Dorsolateral prefrontal cortex (tissue), 120 donors: ENCODE measurements at regions of chr19 and their contacts with region 1.

Region 1: GRCh38 chr19:46614114-46614722 is 10.7 kb downstream of the PTGIR start:
- DNase-seq: peak; percentile 85 to 91 (median 88)
- H3K4me3 ChIP-seq: peak overlapping the region in 3 of 59 donors; percentile 16 to 28 (median 22)
- H3K27ac ChIP-seq: peak overlapping the region in 33 of 59 donors; percentile 7 to 83 (median 51)
- H3K27me3 ChIP-seq: no peaks in the 10 kb centered on the region
- CTCF ChIP-seq: peak; percentile 76 to 98 (median 93)

Region 2: DNA sequence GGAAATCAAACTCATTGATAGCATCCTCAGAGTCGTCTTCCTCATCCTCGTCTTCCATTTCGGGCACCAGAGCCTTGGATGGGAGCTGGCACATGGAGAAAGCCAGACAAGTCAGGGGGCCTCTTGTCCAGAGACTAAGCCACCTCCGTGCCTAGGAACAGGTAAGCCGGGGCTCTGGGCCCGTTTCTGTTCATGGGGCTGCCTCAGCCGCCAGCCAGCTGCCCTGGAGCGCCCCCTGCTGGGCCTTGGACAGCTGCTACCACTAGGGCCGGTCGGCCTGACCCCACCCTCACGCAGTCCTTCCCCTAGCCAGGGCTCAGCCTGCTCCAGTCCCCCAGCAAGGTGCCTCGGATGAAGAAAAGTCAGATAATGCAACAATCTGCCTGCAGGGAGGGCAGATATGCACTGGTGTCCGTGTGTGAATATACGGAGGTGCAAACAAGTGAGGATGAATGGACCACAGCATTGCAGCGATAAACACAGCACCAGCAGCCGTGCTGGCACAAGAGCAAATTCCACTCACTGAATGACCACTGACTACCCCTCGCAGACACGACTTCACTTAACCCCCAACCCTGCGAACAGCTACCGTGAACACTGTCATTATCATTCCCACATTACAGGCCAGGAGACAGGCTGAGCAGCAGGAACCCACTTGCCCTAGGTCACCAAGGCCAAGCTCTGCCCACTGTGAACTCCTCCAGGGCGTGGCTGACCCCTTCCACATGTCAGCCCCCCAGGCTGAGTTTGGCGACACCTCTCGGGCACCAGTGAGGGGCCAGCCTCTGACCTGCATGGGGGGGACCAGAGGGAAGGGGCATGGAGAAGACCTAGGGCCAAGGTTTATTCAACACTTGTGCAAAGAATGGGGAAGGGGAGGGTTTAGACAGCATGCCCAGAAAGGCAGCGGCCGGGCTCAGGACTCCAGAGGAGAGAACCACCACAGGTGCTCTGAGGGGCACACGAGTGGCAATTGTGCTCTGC is 114.8 kb after region 1 on chr19:
- intact Hi-C with region 1: loop called (anchors 5 kb)
- DNase-seq: peak; percentile 42 to 82 (median 76)
- H3K4me3 ChIP-seq: peak overlapping the region in 7 of 59 donors; percentile 5 to 16 (median 10)
- H3K27ac ChIP-seq: peak overlapping the region in 53 of 59 donors; percentile 3 to 85 (median 68)
- H3K27me3 ChIP-seq: no peaks in the 10 kb centered on the region
- CTCF ChIP-seq: peak; percentile 53 to 98 (median 91)